ENCODE measurements at regions of chr1 and their contacts with region 1.

Region 1: GRCh38 chr1:15803354-15803753 is 4.1 kb downstream of the UQCRHL start:
- DNase-seq: peak; percentile 37

Region 2: GRCh38 chr1:15949453-15950245 is 146.3 kb after region 1 on chr1:
- in situ Hi-C with region 1: loop called (anchors 25 kb)
- DNase-seq: peak; percentile 52

Measured in G401 (cell line).